GM23248 (cell line): ENCODE measurements at regions of chr1 and their contacts with region 1.

Region 1: DNA sequence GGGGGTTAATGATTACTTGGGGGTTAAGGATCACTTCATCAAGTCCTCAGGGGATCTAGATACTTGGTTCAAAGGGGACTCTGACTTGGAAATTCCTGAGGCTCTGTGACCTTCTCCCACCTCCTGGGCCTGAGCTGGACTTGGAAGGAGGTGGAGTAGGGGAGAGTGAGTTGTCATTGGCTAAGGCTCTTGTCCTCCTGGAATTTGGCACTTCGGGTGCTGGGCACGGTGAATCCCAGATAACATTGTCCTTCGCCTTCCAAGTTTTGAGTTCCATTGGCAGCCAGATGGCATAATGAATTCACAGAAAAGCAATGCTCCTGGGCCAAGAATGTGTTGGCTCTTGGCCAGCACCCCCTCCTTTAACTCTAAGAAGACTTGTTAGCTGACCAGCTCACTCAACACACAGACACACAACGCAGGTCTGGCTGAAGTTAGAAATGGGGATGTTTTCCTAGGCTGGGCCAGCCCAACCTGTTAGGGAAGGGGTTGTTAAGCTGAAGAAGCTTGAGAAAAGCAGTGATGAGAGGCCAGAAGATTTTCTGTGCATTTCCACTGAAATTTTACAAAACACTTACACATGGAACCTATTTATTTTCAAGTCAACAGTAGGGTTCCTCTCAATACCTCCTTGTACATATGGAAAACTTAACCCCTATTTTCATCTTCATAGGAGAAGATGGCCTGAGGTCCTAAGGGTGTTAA is 29.7 kb downstream of the SLC26A9 start:
- DNase-seq: peak; percentile 25
- H3K4me3 ChIP-seq: no peak overlapping the region
- H3K27ac ChIP-seq: no peak overlapping the region
- H3K4me1 ChIP-seq: peaks cover 7% of the 10 kb centered on the region; the same call in 1 of the 2 replicates
- H3K27me3 ChIP-seq: no peaks in the 10 kb centered on the region

Region 2: GRCh38 chr1:205791568-205792180 is 121.9 kb before region 1 on chr1:
- in situ Hi-C with region 1: loop called (anchors 5 kb)
- DNase-seq: peak; percentile 75
- H3K4me3 ChIP-seq: no peak overlapping the region
- H3K27ac ChIP-seq: no peak overlapping the region
- H3K4me1 ChIP-seq: no peaks in the 10 kb centered on the region
- H3K27me3 ChIP-seq: no peaks in the 10 kb centered on the region